ENCODE measurements at regions of chr18 and their contacts with region 1.

Region 1: GRCh38 chr18:35949903-35950627 is 22.4 kb upstream of the RMP24 start:
- DNase-seq: peak; percentile 58 to 82
- ATAC-seq: peak; percentile 87
- H3K4me3 ChIP-seq: peak overlapping the region; percentile 24 to 27
- H3K27ac ChIP-seq: no peak overlapping the region
- H3K4me1 ChIP-seq: no peaks in the 10 kb centered on the region
- H3K27me3 ChIP-seq: no peaks in the 10 kb centered on the region

Region 2: GRCh38 chr18:35386600-35387351 is 563.3 kb before region 1 on chr18:
- intact Hi-C with region 1: loop called in 1 of 2 experiments (anchors 10 kb)
- DNase-seq: peak in 1 of 2 donors; percentile 71
- ATAC-seq: peak; percentile 86
- H3K4me3 ChIP-seq: no peak overlapping the region
- H3K27ac ChIP-seq: no peak overlapping the region
- H3K4me1 ChIP-seq: peaks cover 2 to 5% of the 10 kb centered on the region in 2 donors
- H3K27me3 ChIP-seq: no peaks in the 10 kb centered on the region

Region 3: DNA sequence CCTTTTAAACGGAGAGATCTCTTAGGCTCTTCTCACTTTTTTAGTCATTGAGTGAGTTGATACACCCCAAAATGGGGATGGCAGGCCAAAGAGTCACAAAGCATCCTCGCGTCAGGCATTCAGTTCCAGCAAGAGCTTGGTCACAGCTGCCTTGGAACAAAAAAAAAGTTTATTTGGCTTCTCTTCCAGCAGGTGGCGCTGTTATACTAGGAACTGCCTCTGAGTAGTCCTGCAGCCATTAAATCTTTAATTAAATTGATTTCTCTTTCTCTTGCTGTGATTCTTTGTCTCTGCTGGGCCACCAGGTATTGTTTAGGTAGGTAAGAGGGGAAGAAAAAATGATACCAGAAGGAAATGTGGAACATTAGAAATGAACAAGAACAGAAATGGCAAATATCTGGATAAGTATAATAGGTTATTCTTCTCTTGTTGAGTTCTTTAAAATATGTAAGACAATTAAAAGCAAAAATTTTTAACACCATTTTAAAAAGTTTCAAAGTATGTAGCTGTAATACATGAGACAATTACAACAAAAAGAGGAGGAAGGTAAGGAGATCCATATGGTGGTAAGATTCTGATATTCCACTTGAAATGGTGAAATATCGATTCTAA is 193.5 kb before region 1 on chr18:
- intact Hi-C with region 1: loop called (anchors 1 to 5 kb)
- DNase-seq: no peak
- ATAC-seq: peak; percentile 81
- H3K4me3 ChIP-seq: no peak overlapping the region
- H3K27ac ChIP-seq: no peak overlapping the region
- H3K4me1 ChIP-seq: no peaks in the 10 kb centered on the region
- H3K27me3 ChIP-seq: no peaks in the 10 kb centered on the region

Region 4: GRCh38 chr18:36075903-36076579 is 126.0 kb after region 1 on chr18:
- intact Hi-C with region 1: no loop called
- DNase-seq: no peak
- ATAC-seq: no peak
- H3K4me3 ChIP-seq: no peak overlapping the region
- H3K27ac ChIP-seq: no peak overlapping the region
- H3K4me1 ChIP-seq: no peaks in the 10 kb centered on the region
- H3K27me3 ChIP-seq: peaks cover 0 to 2% of the 10 kb centered on the region in 2 donors

Measured in aorta (tissue), 5 donors.